ENCODE measurements at regions of chr11 and their contacts with region 1.

Region 1: GRCh38 chr11:35256296-35256695 is 117.3 kb downstream of the CD44 start:
- DNase-seq: no peak

Region 2: DNA sequence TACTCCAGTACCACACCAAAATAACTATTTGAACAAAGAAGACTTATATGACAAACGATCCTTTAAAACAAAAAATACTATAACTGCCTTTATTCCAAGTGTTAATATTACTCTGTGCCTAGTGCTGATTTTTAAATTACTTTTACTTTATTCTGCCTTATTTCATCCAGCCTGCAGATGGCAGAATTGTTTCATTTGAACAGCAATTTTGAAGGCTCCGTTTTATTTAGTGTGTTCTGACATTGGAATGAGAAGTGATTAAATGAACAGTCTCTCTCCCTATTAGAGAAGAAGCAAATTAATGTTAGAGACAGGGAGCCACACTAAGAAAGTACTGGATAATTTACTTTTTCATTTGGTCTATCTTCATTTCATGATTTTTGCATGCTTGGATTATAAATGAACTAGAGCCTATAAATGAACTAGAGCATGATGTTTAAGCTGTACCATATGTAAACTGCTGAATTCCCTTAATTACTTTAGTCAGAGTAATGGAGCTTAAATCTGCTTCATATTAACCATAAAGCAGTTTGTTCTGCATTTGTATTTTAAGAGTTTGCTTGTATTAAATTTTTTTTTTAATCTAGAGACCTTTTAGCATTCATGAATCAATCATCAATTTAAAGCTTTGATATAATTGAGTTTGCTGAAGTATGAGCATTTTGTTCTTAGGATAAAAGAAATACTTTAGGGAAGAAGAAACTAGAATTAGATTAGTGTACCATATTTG is 330.0 kb before region 1 on chr11:
- CTCF ChIA-PET with region 1: interaction called, 10 read pairs
- POLR2A ChIA-PET with region 1: no interaction called
- DNase-seq: peak; percentile 13

Measured in HEK293T (cell line).